B cell (primary cell): ENCODE measurements at regions of chr17 and their contacts with region 1.

Region 1: DNA sequence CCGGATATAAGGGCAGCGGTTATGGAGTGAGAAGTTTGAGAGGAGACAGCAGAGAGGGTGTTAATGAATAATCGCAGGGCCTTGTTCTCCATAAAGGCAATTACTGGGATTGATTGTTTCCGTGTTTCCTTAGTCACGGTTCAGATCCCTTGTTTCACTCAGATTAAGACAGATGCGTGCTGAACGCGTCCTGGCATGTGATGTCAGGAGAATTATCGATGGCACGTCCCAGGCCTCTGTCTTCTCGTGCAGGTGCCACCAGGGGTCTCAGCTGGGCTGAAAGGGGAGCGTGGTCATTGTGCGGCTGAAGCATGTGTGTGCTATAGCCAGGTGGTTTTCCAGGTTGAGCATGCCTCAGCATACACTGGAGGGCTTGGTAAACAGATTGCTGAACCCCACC is 142.4 kb upstream of the NOL11 start:
- DNase-seq: peak; percentile 43
- ATAC-seq: peak; percentile 25
- H3K4me3 ChIP-seq: peak overlapping the region in 2 of 5 experiments; percentile 10 to 37
- H3K4me3 Mint-ChIP-seq: peak overlapping the region; percentile 72
- H3K27ac ChIP-seq: peak overlapping the region in 1 of 2 donors; percentile 38
- H3K27ac Mint-ChIP-seq: peak overlapping the region; percentile 90
- H3K4me1 ChIP-seq: peaks cover 0 to 41% of the 10 kb centered on the region in 2 donors
- H3K4me1 Mint-ChIP-seq: peaks cover 72% of the 10 kb centered on the region
- H3K27me3 ChIP-seq: no peaks in the 10 kb centered on the region
- H3K27me3 Mint-ChIP-seq: no peaks in the 10 kb centered on the region
- CTCF ChIP-seq: no peak

Region 2: GRCh38 chr17:67386965-67387551 is 188.3 kb before region 1 on chr17:
- CTCF ChIA-PET with region 1: no interaction called
- POLR2A ChIA-PET with region 1: no interaction called
- intact Hi-C with region 1: no loop called
- DNase-seq: no peak
- ATAC-seq: no peak
- H3K4me3 ChIP-seq: no peak overlapping the region
- H3K4me3 Mint-ChIP-seq: no peak overlapping the region
- H3K27ac ChIP-seq: no peak overlapping the region
- H3K27ac Mint-ChIP-seq: no peak overlapping the region
- H3K4me1 ChIP-seq: no peaks in the 10 kb centered on the region
- H3K4me1 Mint-ChIP-seq: peaks cover 20% of the 10 kb centered on the region
- H3K27me3 ChIP-seq: no peaks in the 10 kb centered on the region
- H3K27me3 Mint-ChIP-seq: no peaks in the 10 kb centered on the region
- CTCF ChIP-seq: peak; percentile 57

Region 3: DNA sequence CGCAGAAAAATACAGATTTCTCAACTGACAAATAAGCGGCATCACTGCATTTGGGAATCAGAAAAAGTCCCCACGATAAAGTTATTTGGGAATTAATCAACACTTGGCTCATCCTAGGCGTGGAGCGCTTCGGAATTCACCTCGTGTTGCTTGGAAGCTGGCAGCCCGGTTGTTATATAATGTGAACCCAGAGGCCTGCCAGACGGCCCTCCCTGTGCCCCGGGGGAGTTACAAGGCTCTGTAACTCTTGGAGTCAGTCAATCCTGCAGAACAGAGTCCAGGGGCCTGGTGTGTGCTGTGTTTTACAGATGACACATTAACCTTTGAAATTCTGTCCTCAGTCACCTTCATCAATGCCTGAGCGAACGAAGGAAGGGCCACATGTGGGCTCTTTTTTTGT is 87.2 kb before region 1 on chr17:
- CTCF ChIA-PET with region 1: no interaction called
- POLR2A ChIA-PET with region 1: interaction called, 6 read pairs
- intact Hi-C with region 1: loop called (anchors 10 kb)
- DNase-seq: no peak
- ATAC-seq: no peak
- H3K4me3 ChIP-seq: no peak overlapping the region
- H3K4me3 Mint-ChIP-seq: no peak overlapping the region
- H3K27ac ChIP-seq: no peak overlapping the region
- H3K27ac Mint-ChIP-seq: no peak overlapping the region
- H3K4me1 ChIP-seq: peaks cover 0 to 6% of the 10 kb centered on the region in 2 donors
- H3K4me1 Mint-ChIP-seq: peaks cover 14% of the 10 kb centered on the region
- H3K27me3 ChIP-seq: no peaks in the 10 kb centered on the region
- H3K27me3 Mint-ChIP-seq: no peaks in the 10 kb centered on the region
- CTCF ChIP-seq: no peak

Region 4: DNA sequence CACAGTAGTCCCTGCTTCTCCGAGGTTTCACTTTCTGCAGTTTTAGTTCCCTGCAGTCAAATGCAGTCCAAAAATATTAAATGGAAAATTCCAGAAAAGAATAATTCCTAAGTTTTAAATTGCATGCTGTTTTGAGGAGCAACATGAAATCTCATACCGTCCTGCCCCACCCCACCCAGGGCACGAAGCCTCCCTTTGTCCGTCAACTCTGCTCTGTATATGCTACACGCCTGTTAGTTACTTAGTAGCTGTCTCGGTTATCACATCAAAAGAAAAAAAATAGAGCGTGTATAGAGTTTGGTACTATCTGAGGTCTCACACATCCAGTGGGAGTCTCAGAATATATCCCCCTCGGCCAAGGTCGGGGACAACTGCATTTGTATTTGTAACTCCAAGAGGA is 13.0 kb after region 1 on chr17:
- CTCF ChIA-PET with region 1: no interaction called
- POLR2A ChIA-PET with region 1: interaction called, 14 read pairs
- intact Hi-C with region 1: no loop called
- DNase-seq: no peak
- ATAC-seq: no peak
- H3K4me3 ChIP-seq: no peak overlapping the region
- H3K4me3 Mint-ChIP-seq: no peak overlapping the region
- H3K27ac ChIP-seq: no peak overlapping the region
- H3K27ac Mint-ChIP-seq: no peak overlapping the region
- H3K4me1 ChIP-seq: no peaks in the 10 kb centered on the region
- H3K4me1 Mint-ChIP-seq: peaks cover 9% of the 10 kb centered on the region
- H3K27me3 ChIP-seq: no peaks in the 10 kb centered on the region
- H3K27me3 Mint-ChIP-seq: no peaks in the 10 kb centered on the region
- CTCF ChIP-seq: no peak

Region 5: GRCh38 chr17:67602956-67603355 is 27.6 kb after region 1 on chr17:
- CTCF ChIA-PET with region 1: interaction called, 12 read pairs
- POLR2A ChIA-PET with region 1: no interaction called
- intact Hi-C with region 1: no loop called
- DNase-seq: peak; percentile 30
- ATAC-seq: peak; percentile 31
- H3K4me3 ChIP-seq: no peak overlapping the region
- H3K4me3 Mint-ChIP-seq: no peak overlapping the region
- H3K27ac ChIP-seq: no peak overlapping the region
- H3K27ac Mint-ChIP-seq: no peak overlapping the region
- H3K4me1 ChIP-seq: no peaks in the 10 kb centered on the region
- H3K4me1 Mint-ChIP-seq: peaks cover 2% of the 10 kb centered on the region
- H3K27me3 ChIP-seq: no peaks in the 10 kb centered on the region
- H3K27me3 Mint-ChIP-seq: no peaks in the 10 kb centered on the region
- CTCF ChIP-seq: peak; percentile 38

Region 6: DNA sequence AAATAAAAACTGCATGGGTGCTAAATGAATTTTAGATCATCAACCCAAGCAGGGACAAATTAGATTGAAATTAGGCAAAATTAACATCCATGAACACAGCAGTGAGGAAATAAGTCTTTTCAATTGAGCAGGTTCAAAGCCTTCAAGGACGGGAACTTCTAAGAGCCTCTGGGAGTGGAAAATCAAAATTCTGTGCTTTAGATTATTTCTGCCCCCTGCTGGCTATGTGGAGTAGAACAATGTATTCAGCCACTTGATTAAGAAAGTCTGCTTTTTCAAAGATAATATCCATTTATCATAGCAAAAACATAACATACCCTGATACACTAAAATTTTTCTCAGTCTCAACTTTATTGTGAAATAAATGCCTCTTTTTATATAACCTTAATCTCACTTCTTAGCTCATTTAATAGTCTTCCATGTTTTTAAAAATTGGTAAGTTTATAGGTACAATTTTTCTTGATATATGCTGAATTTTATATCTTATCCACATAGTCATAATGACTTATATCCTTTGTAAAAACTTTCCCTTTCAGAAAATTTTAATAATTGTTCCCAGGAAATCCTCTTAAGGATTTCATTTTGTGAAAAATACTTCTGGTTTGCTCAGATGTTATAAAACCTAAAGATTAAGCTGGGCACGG is 114.3 kb after region 1 on chr17:
- CTCF ChIA-PET with region 1: interaction called, 6 read pairs
- POLR2A ChIA-PET with region 1: no interaction called
- intact Hi-C with region 1: loop called (anchors 5 kb)
- DNase-seq: peak; percentile 71
- ATAC-seq: peak; percentile 63
- H3K4me3 ChIP-seq: no peak overlapping the region
- H3K4me3 Mint-ChIP-seq: no peak overlapping the region
- H3K27ac ChIP-seq: no peak overlapping the region
- H3K27ac Mint-ChIP-seq: no peak overlapping the region
- H3K4me1 ChIP-seq: no peaks in the 10 kb centered on the region
- H3K4me1 Mint-ChIP-seq: peaks cover 4% of the 10 kb centered on the region
- H3K27me3 ChIP-seq: no peaks in the 10 kb centered on the region
- H3K27me3 Mint-ChIP-seq: no peaks in the 10 kb centered on the region
- CTCF ChIP-seq: peak; percentile 96

Region 7: GRCh38 chr17:67700037-67700724 is 124.9 kb after region 1 on chr17:
- CTCF ChIA-PET with region 1: no interaction called
- POLR2A ChIA-PET with region 1: no interaction called
- intact Hi-C with region 1: no loop called
- DNase-seq: no peak
- ATAC-seq: no peak
- H3K4me3 ChIP-seq: no peak overlapping the region
- H3K4me3 Mint-ChIP-seq: no peak overlapping the region
- H3K27ac ChIP-seq: no peak overlapping the region
- H3K27ac Mint-ChIP-seq: no peak overlapping the region
- H3K4me1 ChIP-seq: no peaks in the 10 kb centered on the region
- H3K4me1 Mint-ChIP-seq: no peaks in the 10 kb centered on the region
- H3K27me3 ChIP-seq: peaks cover 0 to 4% (median 0%) of the 10 kb centered on the region in 4 experiments
- H3K27me3 Mint-ChIP-seq: peaks cover 3% of the 10 kb centered on the region
- CTCF ChIP-seq: no peak